Left ventricle myocardium superior (tissue), 1 donor: ENCODE measurements at regions of chr5 and their contacts with region 1.

Region 1: GRCh38 chr5:58849921-58850667 is 267.2 kb downstream of the RAB3C start:
- DNase-seq: no peak
- ATAC-seq: peak; percentile 36

Region 2: DNA sequence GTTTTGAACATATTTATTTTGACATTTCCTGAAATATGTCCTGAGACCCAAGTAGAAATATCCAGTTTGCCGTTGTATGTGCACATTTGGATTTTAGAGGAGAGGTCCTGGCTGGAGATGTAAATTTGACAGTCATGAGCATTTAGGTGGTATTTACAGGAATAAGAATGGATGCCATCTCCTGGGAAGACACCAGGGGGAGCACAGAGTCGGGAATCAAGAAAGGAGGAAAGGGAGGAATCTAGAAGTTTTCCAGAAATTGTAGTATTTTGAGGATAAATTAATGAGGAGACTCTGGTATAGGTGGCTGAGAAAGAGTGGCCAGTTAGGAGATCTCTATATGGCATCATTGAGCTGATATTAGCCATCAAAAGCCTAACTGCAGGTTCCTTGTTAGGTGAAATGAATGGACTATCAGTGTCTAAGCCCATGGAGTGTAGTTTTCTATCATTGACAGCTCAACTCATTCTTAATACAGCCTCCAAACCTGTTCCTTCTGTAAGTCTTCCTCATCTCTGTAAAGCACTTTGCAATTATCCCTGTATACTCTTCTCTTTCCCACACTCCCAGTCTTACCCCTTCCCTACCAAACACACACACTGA is 351.7 kb before region 1 on chr5:
- intact Hi-C with region 1: loop called (anchors 5 kb)
- DNase-seq: no peak
- ATAC-seq: peak; percentile 42

Region 3: DNA sequence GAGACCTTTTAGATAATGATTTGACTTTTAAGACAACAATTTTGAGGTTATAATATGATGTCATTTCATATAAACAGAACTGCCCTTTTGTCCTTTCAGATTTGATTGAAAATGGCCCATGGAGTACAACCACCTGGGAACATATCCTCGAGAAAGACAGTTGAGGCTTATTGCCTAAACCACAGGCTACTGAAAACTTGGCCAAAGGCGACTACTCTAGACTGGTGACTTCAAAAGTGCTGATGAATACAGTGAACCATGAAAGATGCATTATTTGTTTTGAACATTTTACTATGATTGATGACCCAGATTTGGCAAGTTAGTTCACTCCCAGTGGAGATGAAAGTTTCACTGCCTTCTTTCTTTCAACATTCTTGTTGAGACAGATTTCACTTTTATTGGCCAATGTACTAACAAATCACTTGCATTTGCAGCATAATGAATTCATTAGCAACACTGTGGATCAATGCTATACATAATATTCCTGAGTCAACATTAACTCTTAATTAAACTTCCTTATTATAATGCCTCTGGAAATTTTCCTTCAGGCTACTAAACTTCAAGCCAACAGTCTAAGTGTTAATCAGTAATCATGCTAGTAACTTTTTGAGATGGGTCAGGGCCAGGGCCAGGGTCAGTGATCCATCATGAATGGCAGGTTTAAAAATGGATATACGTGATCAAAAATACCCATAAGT is 213.0 kb after region 1 on chr5:
- intact Hi-C with region 1: no loop called
- DNase-seq: no peak
- ATAC-seq: peak; percentile 53